PC-3 (cell line): ENCODE measurements at regions of chr2 and their contacts with region 1.

Region 1: DNA sequence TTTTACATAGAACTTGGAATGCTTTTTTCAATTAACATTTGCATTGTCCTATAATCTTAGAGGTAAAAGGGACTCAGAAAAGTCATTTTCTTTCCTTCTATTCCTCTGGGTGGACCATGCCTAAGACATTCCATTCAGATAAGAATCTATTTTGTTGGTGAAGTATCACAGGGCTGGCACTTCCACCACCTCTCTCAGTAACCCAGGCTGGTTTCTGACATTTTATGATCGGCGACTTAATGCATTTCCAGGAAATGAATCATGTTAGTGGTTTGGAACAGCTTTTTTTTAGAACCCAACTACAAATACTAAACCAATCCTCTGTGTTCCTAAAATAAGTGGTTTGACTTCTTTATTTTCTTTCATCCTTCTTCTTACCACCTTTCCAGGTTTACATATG is 27.0 kb downstream of the GAD1 start:
- DNase-seq: peak; percentile 94
- ATAC-seq: peak; percentile 100
- H3K4me3 ChIP-seq: no peak overlapping the region
- H3K27ac ChIP-seq: 0 out of 2 replicates have a peak overlapping the region, but pooled peaks have one; percentile 6
- H3K4me1 ChIP-seq: peaks cover 24% of the 10 kb centered on the region
- H3K27me3 ChIP-seq: no peaks in the 10 kb centered on the region
- CTCF ChIP-seq: no peak

Region 2: GRCh38 chr2:169599568-169599967 is 1244.1 kb before region 1 on chr2:
- CTCF ChIA-PET with region 1: no interaction called
- POLR2A ChIA-PET with region 1: interaction called, 19 read pairs
- intact Hi-C with region 1: no loop called
- DNase-seq: no peak
- ATAC-seq: no peak
- H3K4me3 ChIP-seq: no peak overlapping the region
- H3K27ac ChIP-seq: no peak overlapping the region
- H3K4me1 ChIP-seq: no peaks in the 10 kb centered on the region
- H3K27me3 ChIP-seq: no peaks in the 10 kb centered on the region
- CTCF ChIP-seq: no peak

Region 3: GRCh38 chr2:170873035-170873692 is 29.5 kb after region 1 on chr2:
- CTCF ChIA-PET with region 1: interaction called, 5 read pairs
- POLR2A ChIA-PET with region 1: no interaction called
- intact Hi-C with region 1: loop called (anchors 2 kb)
- DNase-seq: peak; percentile 84
- ATAC-seq: peak; percentile 86
- H3K4me3 ChIP-seq: peak overlapping the region; percentile 49; the same call in 1 of the 2 replicates
- H3K27ac ChIP-seq: no peak overlapping the region
- H3K4me1 ChIP-seq: peaks cover 11% of the 10 kb centered on the region
- H3K27me3 ChIP-seq: no peaks in the 10 kb centered on the region
- CTCF ChIP-seq: peak; percentile 94